ENCODE measurements at regions of chr20 and their contacts with region 1.

Region 1: DNA sequence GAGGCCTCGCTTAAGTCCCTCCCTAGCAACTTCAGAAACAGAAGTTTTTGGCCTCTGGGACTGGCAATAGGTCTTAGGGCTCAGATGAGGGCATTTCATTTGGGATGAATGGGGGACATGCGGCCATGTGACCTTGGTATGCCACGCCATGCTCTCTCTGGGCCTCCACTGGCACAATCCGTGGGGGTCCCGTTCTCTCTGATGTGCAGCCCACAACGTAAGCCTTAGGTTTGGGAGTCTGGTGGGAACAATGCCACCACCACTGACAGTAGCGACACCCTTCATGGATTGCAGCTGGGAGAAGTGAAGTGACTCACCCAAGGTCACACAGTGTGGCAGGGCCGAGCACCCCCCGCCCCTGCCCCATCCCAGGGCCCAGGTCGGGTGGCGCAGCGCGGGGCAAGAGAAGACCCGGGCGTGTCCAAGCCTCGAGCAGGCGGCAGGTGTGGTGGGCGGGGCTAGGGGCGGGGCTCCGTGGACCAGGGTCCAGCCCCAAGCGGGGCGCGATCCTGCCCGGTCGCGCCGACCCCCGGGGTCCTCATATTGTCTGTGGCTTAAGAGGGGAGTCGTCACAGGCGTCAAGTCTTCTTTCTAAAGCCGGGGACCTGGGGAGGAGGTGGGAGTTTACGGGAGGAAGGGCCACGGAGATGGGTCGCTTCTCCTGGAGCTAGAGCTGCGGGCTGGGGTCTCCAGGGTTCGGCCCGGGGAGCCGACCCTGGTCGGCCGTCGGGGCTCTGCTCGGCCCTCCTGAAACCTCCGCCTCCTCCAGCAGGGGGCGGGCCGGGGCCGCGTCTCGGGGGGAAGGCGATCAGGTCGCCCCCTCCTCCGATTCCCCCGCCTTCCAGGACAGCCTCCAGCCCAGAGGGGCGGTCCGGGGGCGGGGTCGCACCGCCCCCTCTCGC is 698 bp upstream of the CEBPB start:
- DNase-seq: peak; percentile 92 to 98 (median 94)
- ATAC-seq: peak; percentile 78
- H3K4me3 ChIP-seq: peak overlapping the region; percentile 72 to 75
- H3K27ac ChIP-seq: peak overlapping the region; percentile 99
- H3K4me1 ChIP-seq: peaks cover 11 to 65% of the 10 kb centered on the region in 2 donors
- H3K27me3 ChIP-seq: no peaks in the 10 kb centered on the region
- CTCF ChIP-seq: peak; percentile 75 to 84

Region 2: DNA sequence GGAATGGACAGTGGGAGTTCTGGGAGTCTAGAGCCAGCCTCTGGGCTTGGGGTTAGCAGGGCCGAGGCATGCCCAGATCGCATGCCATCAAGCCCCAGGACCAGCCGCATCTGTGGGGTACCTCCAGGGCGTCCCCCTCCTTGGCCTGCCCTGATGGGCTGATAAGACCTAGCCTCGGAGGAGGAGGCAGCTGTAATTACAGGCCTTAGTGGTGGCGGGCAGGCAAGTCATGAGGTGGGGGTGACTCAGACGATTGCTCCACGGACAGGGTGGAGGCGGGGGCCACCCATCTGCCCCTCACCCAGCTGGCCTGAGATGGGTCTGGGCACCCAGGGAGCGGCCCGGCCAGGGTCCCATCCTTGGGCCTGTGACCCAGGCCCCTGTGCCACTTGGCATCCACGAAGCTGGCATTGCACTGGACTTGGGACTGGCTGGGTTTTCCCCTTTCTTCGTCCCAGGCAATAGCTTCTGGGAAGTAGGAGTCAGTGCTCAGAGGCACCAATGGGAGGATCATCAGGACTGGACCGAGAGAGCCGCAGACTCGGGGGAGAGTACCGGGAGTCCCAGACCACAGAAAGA is 58.2 kb after region 1 on chr20:
- intact Hi-C with region 1: no loop called
- DNase-seq: peak in 1 of 4 donors; percentile 62
- ATAC-seq: peak; percentile 47
- H3K4me3 ChIP-seq: no peak overlapping the region
- H3K27ac ChIP-seq: no peak overlapping the region
- H3K4me1 ChIP-seq: peaks cover 0 to 26% of the 10 kb centered on the region in 2 donors
- H3K27me3 ChIP-seq: no peaks in the 10 kb centered on the region
- CTCF ChIP-seq: no peak

Region 3: GRCh38 chr20:50460460-50461267 is 270.7 kb after region 1 on chr20:
- intact Hi-C with region 1: loop called (anchors 2 to 5 kb)
- DNase-seq: peak; percentile 83 to 95 (median 88)
- ATAC-seq: peak; percentile 95
- H3K4me3 ChIP-seq: no peak overlapping the region
- H3K27ac ChIP-seq: peak overlapping the region in 1 of 2 donors; percentile 37
- H3K4me1 ChIP-seq: peaks cover 0 to 56% of the 10 kb centered on the region in 2 donors
- H3K27me3 ChIP-seq: no peaks in the 10 kb centered on the region
- CTCF ChIP-seq: peak; percentile 90 to 98

Region 4: DNA sequence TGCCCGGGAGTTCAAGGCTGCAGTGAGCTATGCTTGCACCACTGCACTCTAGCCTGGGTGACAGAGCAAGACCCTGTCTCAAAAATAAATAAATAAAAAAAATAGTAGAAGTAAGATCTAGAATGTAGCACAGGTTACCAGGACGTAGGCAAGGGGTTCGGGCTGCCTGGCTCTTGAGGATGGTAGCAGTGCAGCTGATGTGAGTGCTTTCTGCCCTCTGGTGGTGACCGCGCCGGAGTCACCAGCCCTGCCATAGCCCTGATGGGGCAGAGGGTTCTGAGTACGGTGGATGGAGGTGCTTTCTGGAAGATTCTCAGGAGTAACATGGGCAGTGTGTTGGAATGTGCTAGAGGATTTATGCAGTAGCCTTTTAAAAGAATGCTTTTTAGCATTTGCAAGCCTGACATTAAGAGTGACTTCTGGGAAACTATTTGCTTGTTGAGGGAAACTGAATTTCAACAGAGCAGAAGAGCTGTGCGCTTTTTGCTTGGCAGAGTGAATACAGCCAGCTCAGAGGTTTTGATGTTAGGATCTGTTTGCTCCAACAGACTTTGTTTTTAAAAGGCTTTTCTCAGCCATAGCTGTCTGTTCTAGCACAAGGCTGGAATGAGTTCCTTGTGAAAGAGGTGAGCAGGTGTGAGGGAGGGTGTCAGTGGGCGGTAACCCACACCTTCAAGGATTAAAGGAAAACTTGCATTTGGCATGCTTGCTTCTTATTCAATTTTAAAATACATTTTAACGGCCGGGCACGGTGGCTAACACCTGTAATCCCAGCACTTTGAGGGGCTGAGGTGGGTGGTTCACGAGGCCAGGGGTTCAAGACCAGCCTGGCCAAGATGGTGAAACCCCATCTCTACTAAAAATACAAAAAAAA is 386.2 kb after region 1 on chr20:
- intact Hi-C with region 1: loop called in 1 of 2 experiments (anchors 5 kb)
- DNase-seq: peak; percentile 52 to 88 (median 78)
- ATAC-seq: peak; percentile 79
- H3K4me3 ChIP-seq: no peak overlapping the region
- H3K27ac ChIP-seq: no peak overlapping the region
- H3K4me1 ChIP-seq: peaks cover 8 to 45% of the 10 kb centered on the region in 2 donors
- H3K27me3 ChIP-seq: no peaks in the 10 kb centered on the region
- CTCF ChIP-seq: peak; percentile 75 to 84

Measured in left lung (tissue), 14 donors.